Gastrocnemius medialis (tissue), 4 donors: ENCODE measurements at regions of chr17 and their contacts with region 1.

Region 1: GRCh38 chr17:69607162-69607834 is 192.8 kb downstream of the MAP2K6 start:
- DNase-seq: peak; percentile 55 to 75
- ATAC-seq: peak; percentile 60 to 88
- H3K4me3 ChIP-seq: no peak overlapping the region
- H3K27ac ChIP-seq: peak overlapping the region; percentile 69 to 80 (median 72)
- H3K4me1 ChIP-seq: peaks cover 27 to 35% of the 10 kb centered on the region in 2 donors
- H3K27me3 ChIP-seq: no peaks in the 10 kb centered on the region
- CTCF ChIP-seq: peak; percentile 78 to 94 (median 86)
- POLR2A ChIP-seq: no peak

Region 2: DNA sequence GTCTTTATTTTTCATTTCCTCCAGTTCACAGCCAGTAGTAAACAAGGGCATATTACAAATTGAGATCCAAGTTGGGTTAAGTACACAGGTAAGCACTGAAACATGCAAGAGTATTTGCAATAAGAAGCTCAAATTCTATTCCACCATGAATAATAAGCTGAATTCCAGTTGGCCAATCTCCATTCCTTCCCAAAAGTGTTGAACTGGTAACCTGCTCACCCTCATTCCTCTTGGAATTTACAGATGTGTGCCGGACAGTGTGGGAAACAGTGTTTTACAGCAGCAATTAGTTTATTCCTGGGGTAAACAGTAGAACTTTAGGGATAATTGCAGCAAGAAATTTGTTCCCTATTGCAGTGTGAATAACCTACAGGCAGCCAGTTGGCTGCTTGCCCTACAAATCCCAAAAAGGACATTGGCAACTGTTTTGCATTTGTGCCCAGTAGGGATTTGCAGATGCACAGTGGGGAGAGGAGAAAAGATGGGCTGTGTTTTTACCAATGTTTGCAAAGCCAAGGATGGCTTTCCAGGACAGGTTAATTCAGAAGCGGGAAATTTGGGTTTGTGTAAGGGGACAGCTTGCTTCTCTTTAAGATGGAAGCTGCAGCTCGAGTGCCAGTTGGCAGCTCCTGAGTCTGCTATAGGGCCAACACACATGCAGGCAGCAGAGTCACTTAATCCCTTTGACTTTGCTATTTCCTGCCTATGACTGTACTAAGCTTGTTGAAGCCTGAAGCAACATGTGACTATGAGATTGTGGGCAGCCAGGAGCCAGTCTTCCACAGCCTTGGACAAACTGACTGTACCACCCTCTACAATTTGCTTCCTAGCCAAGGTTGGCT is 126.1 kb after region 1 on chr17:
- in situ Hi-C with region 1: no loop called
- intact Hi-C with region 1: loop called (anchors 10 kb)
- DNase-seq: peak; percentile 82 to 91
- ATAC-seq: peak; percentile 100
- H3K4me3 ChIP-seq: no peak overlapping the region
- H3K27ac ChIP-seq: peak overlapping the region; percentile 74 to 83 (median 78)
- H3K4me1 ChIP-seq: peaks cover 32 to 40% of the 10 kb centered on the region in 2 donors
- H3K27me3 ChIP-seq: no peaks in the 10 kb centered on the region
- CTCF ChIP-seq: no peak
- POLR2A ChIP-seq: no peak